ENCODE measurements at regions of chr17 and their contacts with region 1.

Region 1: GRCh38 chr17:7823581-7824397 is 10.2 kb upstream of the KDM6B start:
- DNase-seq: peak in 1 of 2 donors; percentile 66
- ATAC-seq: no peak
- H3K4me3 ChIP-seq: no peak overlapping the region
- H3K27ac ChIP-seq: no peak overlapping the region
- H3K4me1 ChIP-seq: no peaks in the 10 kb centered on the region
- H3K27me3 ChIP-seq: no peaks in the 10 kb centered on the region

Region 2: GRCh38 chr17:7740481-7741001 is 83.2 kb before region 1 on chr17:
- intact Hi-C with region 1: loop called in 1 of 2 experiments (anchors 5 kb)
- DNase-seq: no peak
- ATAC-seq: no peak
- H3K4me3 ChIP-seq: no peak overlapping the region
- H3K27ac ChIP-seq: no peak overlapping the region
- H3K4me1 ChIP-seq: no peaks in the 10 kb centered on the region
- H3K27me3 ChIP-seq: no peaks in the 10 kb centered on the region

Region 3: GRCh38 chr17:7786866-7787265 is 36.9 kb before region 1 on chr17:
- intact Hi-C with region 1: no loop called
- DNase-seq: no peak
- ATAC-seq: no peak
- H3K4me3 ChIP-seq: no peak overlapping the region
- H3K27ac ChIP-seq: no peak overlapping the region
- H3K4me1 ChIP-seq: no peaks in the 10 kb centered on the region
- H3K27me3 ChIP-seq: no peaks in the 10 kb centered on the region

Region 4: GRCh38 chr17:7862692-7863437 is 39.1 kb after region 1 on chr17:
- intact Hi-C with region 1: no loop called
- DNase-seq: no peak
- ATAC-seq: no peak
- H3K4me3 ChIP-seq: no peak overlapping the region
- H3K27ac ChIP-seq: no peak overlapping the region
- H3K4me1 ChIP-seq: no peaks in the 10 kb centered on the region
- H3K27me3 ChIP-seq: no peaks in the 10 kb centered on the region